ENCODE measurements at regions of chr1 and their contacts with region 1.

Region 1: GRCh38 chr1:171644805-171645483 is 7.5 kb downstream of the MYOC start:
- DNase-seq: peak; percentile 91
- ATAC-seq: peak; percentile 97
- H3K4me3 ChIP-seq: no peak overlapping the region
- H3K27ac ChIP-seq: no peak overlapping the region
- H3K4me1 ChIP-seq: peaks cover 0 to 9% of the 10 kb centered on the region in 2 experiments; a peak in 2 of 4 replicates
- H3K27me3 ChIP-seq: no peaks in the 10 kb centered on the region
- CTCF ChIP-seq: peak; percentile 77 to 85 (median 81)
- POLR2A ChIP-seq: no peak
- RAD21 ChIP-seq: peak; percentile 90

Region 2: GRCh38 chr1:171298696-171299095 is 346.2 kb before region 1 on chr1:
- CTCF ChIA-PET with region 1: no interaction called
- POLR2A ChIA-PET with region 1: no interaction called
- RAD21 ChIA-PET with region 1: no interaction called
- intact Hi-C with region 1: no loop called
- DNase-seq: no peak
- ATAC-seq: no peak
- H3K4me3 ChIP-seq: no peak overlapping the region
- H3K27ac ChIP-seq: no peak overlapping the region
- H3K4me1 ChIP-seq: no peaks in the 10 kb centered on the region
- H3K27me3 ChIP-seq: no peaks in the 10 kb centered on the region; the same call in 1 of the 2 replicates
- CTCF ChIP-seq: no peak
- POLR2A ChIP-seq: no peak
- RAD21 ChIP-seq: no peak

Region 3: GRCh38 chr1:171438192-171438840 is 206.6 kb before region 1 on chr1:
- CTCF ChIA-PET with region 1: no interaction called
- POLR2A ChIA-PET with region 1: no interaction called
- RAD21 ChIA-PET with region 1: no interaction called
- intact Hi-C with region 1: no loop called
- DNase-seq: peak; percentile 81
- ATAC-seq: peak; percentile 90
- H3K4me3 ChIP-seq: no peak overlapping the region
- H3K27ac ChIP-seq: no peak overlapping the region
- H3K4me1 ChIP-seq: peaks cover 3 to 34% of the 10 kb centered on the region in 2 experiments
- H3K27me3 ChIP-seq: no peaks in the 10 kb centered on the region
- CTCF ChIP-seq: no peak
- POLR2A ChIP-seq: no peak
- RAD21 ChIP-seq: peak; percentile 17; the same call in 1 of the 2 replicates

Region 4: DNA sequence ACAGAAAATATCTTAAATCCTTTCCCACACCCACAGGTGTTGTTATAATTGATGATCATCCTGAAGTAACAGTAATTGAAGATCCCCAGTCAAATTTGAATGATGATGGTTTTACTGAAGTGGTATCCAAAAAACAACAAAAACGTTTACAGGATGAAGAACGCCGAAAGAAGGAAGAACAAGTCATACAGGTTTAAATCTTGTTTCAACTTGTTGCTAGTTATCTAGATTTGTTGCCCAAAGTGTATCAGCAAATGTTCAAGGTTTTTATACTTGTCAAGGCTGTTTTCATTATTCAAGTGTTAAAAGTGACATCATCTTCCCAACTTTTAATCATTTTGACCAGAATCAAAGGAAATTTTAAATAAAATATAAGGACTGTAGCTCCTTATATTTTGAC is 94.9 kb before region 1 on chr1:
- CTCF ChIA-PET with region 1: no interaction called
- POLR2A ChIA-PET with region 1: no interaction called
- RAD21 ChIA-PET with region 1: no interaction called
- intact Hi-C with region 1: no loop called
- DNase-seq: no peak
- ATAC-seq: no peak
- H3K4me3 ChIP-seq: no peak overlapping the region
- H3K27ac ChIP-seq: no peak overlapping the region
- H3K4me1 ChIP-seq: no peaks in the 10 kb centered on the region
- H3K27me3 ChIP-seq: no peaks in the 10 kb centered on the region
- CTCF ChIP-seq: no peak
- POLR2A ChIP-seq: no peak
- RAD21 ChIP-seq: no peak

Region 5: GRCh38 chr1:171654942-171655745 is 10.2 kb after region 1 on chr1:
- CTCF ChIA-PET with region 1: interaction called, 10 read pairs
- POLR2A ChIA-PET with region 1: interaction called, 3 read pairs
- RAD21 ChIA-PET with region 1: no interaction called
- intact Hi-C with region 1: no loop called
- DNase-seq: peak; percentile 18
- ATAC-seq: peak; percentile 92
- H3K4me3 ChIP-seq: no peak overlapping the region
- H3K27ac ChIP-seq: no peak overlapping the region
- H3K4me1 ChIP-seq: peaks cover 0 to 12% of the 10 kb centered on the region in 2 experiments; a peak in 3 of 4 replicates
- H3K27me3 ChIP-seq: no peaks in the 10 kb centered on the region
- CTCF ChIP-seq: peak; percentile 40 to 80 (median 75); a peak in 5 of 6 replicates
- POLR2A ChIP-seq: no peak
- RAD21 ChIP-seq: peak; percentile 46

Region 6: GRCh38 chr1:171741872-171742576 is 97.1 kb after region 1 on chr1 and contains the start of gene VAMP4:
- CTCF ChIA-PET with region 1: interaction called, 4 read pairs
- POLR2A ChIA-PET with region 1: no interaction called
- RAD21 ChIA-PET with region 1: interaction called in 1 of 2 experiments, 4 read pairs
- intact Hi-C with region 1: loop called (anchors 1 kb)
- DNase-seq: peak; percentile 60
- ATAC-seq: peak; percentile 93
- H3K4me3 ChIP-seq: peak within 1 kb of the TSS; percentile 87 to 91
- H3K27ac ChIP-seq: peak within 1 kb of the TSS; percentile 82
- H3K4me1 ChIP-seq: peaks cover 4 to 27% of the 10 kb centered on the region in 2 experiments; a peak in 3 of 4 replicates
- H3K27me3 ChIP-seq: no peaks in the 10 kb centered on the region
- CTCF ChIP-seq: no peak
- POLR2A ChIP-seq: peak; percentile 81
- RAD21 ChIP-seq: no peak
- total RNA-seq, gene VAMP4: 6.3 TPM

Region 7: DNA sequence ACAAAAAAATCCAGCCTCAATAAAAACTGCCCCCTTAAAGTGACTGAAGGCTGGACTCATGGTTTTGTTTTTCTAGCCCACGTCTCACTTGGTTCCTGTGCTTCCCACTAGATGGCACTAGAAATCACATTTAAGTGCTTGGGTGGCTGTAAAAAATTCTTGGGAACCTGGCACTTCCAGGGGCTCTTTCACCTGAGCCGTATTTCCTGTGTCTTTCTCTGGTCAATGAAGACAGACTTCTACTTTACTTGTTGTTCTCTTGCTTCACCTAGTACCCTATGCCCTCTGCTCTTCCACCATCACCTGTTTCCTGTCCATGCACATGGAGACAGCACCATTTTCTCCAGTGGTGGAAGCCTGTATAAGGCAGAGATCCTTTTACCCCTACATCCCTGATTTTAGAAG is 156.5 kb after region 1 on chr1:
- CTCF ChIA-PET with region 1: interaction called, 9 read pairs
- POLR2A ChIA-PET with region 1: no interaction called
- RAD21 ChIA-PET with region 1: no interaction called
- intact Hi-C with region 1: loop called (anchors 5 kb)
- DNase-seq: no peak
- ATAC-seq: peak; percentile 81
- H3K4me3 ChIP-seq: no peak overlapping the region
- H3K27ac ChIP-seq: no peak overlapping the region
- H3K4me1 ChIP-seq: peaks cover 0 to 4% of the 10 kb centered on the region in 2 experiments; a peak in 1 of 4 replicates
- H3K27me3 ChIP-seq: no peaks in the 10 kb centered on the region
- CTCF ChIP-seq: peak; percentile 73 to 86 (median 81)
- POLR2A ChIP-seq: no peak
- RAD21 ChIP-seq: peak; percentile 86

Region 8: GRCh38 chr1:172443626-172444453 is 798.9 kb after region 1 on chr1 and contains the start of gene PIGC:
- CTCF ChIA-PET with region 1: no interaction called
- POLR2A ChIA-PET with region 1: no interaction called
- RAD21 ChIA-PET with region 1: no interaction called
- intact Hi-C with region 1: loop called (anchors 2 kb)
- DNase-seq: peak; percentile 81
- ATAC-seq: peak; percentile 98
- H3K4me3 ChIP-seq: peak within 1 kb of the TSS; percentile 78 to 81
- H3K27ac ChIP-seq: peak within 1 kb of the TSS; percentile 51
- H3K4me1 ChIP-seq: peaks cover 4 to 13% of the 10 kb centered on the region in 2 experiments; a peak in 2 of 4 replicates
- H3K27me3 ChIP-seq: no peaks in the 10 kb centered on the region
- CTCF ChIP-seq: peak; percentile 81 to 92 (median 82)
- POLR2A ChIP-seq: no peak
- RAD21 ChIP-seq: peak; percentile 69
- total RNA-seq, gene PIGC: 11.9 TPM